PC-9 (cell line): ENCODE measurements at regions of chr7 and their contacts with region 1.

Region 1: DNA sequence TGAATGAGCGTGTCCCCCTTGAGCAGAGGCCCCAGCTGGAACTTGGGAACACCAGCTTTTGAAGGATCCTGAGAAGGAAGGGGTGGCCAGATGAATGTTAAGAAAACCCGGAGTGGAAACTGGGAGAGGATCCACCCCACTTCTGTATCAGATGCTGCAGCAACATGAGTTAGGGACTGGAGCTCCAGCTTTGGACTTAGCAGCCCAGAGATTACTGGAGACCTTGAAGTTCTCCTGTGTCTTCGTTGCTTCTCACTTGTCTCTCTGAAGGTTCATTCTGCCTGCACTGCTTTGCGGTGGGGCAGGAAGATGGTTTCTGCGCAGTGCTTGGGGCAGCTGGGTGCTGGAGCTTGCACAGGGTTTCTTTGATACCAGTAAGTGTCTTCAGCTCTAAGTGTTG is 9.3 kb downstream of the TMEM248 start:
- DNase-seq: no peak
- H3K4me3 ChIP-seq: no peak overlapping the region
- H3K27ac ChIP-seq: no peak overlapping the region
- H3K4me1 ChIP-seq: no peaks in the 10 kb centered on the region
- H3K27me3 ChIP-seq: no peaks in the 10 kb centered on the region
- CTCF ChIP-seq: no peak

Region 2: DNA sequence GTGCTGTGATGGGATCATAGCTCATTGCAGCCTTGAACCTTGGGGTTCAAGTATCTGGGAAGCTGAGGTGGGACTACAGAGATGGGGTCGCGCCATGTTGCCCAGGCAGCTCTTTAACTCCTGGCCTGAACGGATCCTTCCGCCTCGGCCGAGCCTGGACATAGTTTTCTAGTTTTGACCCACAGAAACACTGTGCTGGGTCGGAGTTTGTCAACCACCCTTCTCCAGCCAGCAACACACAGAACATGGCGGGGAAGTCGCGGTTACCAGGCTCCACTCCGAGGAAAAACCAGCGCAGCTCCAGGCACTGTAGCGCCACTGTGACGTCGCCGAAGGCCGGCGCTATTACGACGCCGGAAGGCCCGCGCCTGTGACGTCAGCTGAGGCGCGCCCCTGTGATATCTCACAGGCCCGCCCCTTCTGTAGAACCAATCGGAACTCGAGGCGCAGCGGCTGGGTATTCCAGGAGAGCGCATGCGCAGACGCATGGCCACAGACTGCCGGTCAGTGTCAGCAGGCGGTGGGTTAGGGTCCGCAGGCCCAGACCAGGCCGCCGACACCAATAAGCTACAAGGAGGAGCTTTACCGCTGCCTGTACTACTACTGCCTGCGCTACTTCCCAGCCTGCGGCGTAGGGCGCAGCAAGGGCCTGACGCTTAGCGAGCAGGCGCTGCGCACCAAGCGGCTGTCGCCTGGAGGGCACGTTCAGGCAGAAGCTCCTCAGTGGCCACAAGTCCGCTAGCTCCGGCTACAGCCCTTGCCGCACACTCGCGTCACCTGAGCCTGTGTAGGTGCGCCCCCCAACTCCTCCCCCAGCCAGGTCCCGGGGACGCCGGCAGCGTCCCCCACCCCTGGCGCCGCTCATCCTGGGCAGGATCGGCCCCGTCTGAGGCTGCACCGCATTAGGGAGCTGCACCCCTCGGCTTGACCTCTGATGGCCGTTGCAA is 436.8 kb before region 1 on chr7:
- CTCF ChIA-PET with region 1: no interaction called
- POLR2A ChIA-PET with region 1: no interaction called
- intact Hi-C with region 1: no loop called
- DNase-seq: peak; percentile 89 to 98
- H3K4me3 ChIP-seq: peak overlapping the region; percentile 82
- H3K27ac ChIP-seq: peak overlapping the region; percentile 57
- H3K4me1 ChIP-seq: peaks cover 5% of the 10 kb centered on the region; the same call in 1 of the 2 replicates
- H3K27me3 ChIP-seq: no peaks in the 10 kb centered on the region
- CTCF ChIP-seq: no peak

Region 3: DNA sequence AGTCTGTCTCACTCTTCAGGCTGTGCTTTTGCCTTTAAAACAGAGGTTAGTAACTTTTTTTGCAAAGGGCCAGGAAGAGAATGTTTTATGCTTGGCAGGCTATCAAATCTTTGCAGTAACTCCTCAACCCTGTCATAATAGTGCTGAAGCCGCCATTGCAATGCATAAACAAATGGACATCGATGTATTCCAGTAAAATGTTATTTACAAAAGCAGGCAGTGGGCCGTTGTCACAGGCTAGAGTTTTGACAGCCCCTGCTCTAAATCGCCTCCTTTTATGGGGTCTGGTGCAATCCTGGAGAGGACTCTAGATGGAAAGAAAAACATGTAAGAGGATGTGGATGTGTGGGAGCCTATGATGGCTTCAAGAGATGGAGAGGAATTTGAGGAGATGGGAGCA is 634.6 kb after region 1 on chr7:
- CTCF ChIA-PET with region 1: no interaction called
- POLR2A ChIA-PET with region 1: interaction called, 28 read pairs
- intact Hi-C with region 1: no loop called
- DNase-seq: no peak
- H3K4me3 ChIP-seq: no peak overlapping the region
- H3K27ac ChIP-seq: no peak overlapping the region
- H3K4me1 ChIP-seq: no peaks in the 10 kb centered on the region
- H3K27me3 ChIP-seq: peaks cover 45% of the 10 kb centered on the region
- CTCF ChIP-seq: no peak